Activated T-helper 2 cell treated with anti-CD3 and anti-CD28 coated beads, Interferon-gamma antibody, Interleukin-2, Interleukin-4, amounts not matched to agents 10 μg/mL and 5 μg/mL and 100 μg/mL, durations not matched to agents 14 hours and 24 hours and 36 hours (primary cell): ENCODE measurements at regions of chr5 and their contacts with region 1.

Region 1: GRCh38 chr5:76175051-76175666 is 92.0 kb downstream of the SV2C start:
- DNase-seq: peak; percentile 28
- H3K4me3 Mint-ChIP-seq: no peak overlapping the region
- H3K27ac Mint-ChIP-seq: no peak overlapping the region
- H3K4me1 Mint-ChIP-seq: peaks cover 18% of the 10 kb centered on the region
- H3K27me3 Mint-ChIP-seq: peaks cover 7% of the 10 kb centered on the region

Region 2: DNA sequence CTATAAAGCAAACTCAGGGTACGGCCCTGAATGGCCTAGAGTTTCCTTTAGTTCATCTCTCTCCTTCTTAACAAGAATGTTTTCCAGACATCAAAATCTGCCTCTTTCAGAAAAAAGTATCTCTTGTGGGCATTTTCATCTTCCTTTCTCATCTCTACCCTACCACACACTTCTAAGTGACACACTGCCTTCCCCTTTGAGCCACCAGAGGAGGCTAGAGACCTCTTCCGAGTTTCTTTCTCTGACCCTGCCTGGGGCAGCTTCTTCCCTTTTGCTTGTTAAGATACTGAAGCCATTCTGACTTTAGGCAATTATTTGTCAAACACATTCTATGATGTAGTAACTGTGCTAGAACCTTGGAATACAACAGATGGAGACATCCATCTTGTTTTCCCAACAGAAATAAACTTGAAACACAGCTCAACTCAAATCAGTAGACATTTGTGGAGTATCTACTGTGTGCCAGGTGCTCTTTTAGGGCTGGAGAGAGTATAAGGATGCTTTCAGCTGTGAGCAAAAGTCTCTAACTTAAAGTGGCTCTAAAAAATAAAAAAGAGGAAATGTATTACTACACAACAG is 100.6 kb before region 1 on chr5:
- intact Hi-C with region 1: loop called (anchors 5 kb)
- DNase-seq: no peak
- H3K4me3 Mint-ChIP-seq: no peak overlapping the region
- H3K27ac Mint-ChIP-seq: no peak overlapping the region
- H3K4me1 Mint-ChIP-seq: no peaks in the 10 kb centered on the region
- H3K27me3 Mint-ChIP-seq: peaks cover 61% of the 10 kb centered on the region